Motor neuron (in vitro differentiated cells): ENCODE measurements at regions of chr22 and their contacts with region 1.

Region 1: DNA sequence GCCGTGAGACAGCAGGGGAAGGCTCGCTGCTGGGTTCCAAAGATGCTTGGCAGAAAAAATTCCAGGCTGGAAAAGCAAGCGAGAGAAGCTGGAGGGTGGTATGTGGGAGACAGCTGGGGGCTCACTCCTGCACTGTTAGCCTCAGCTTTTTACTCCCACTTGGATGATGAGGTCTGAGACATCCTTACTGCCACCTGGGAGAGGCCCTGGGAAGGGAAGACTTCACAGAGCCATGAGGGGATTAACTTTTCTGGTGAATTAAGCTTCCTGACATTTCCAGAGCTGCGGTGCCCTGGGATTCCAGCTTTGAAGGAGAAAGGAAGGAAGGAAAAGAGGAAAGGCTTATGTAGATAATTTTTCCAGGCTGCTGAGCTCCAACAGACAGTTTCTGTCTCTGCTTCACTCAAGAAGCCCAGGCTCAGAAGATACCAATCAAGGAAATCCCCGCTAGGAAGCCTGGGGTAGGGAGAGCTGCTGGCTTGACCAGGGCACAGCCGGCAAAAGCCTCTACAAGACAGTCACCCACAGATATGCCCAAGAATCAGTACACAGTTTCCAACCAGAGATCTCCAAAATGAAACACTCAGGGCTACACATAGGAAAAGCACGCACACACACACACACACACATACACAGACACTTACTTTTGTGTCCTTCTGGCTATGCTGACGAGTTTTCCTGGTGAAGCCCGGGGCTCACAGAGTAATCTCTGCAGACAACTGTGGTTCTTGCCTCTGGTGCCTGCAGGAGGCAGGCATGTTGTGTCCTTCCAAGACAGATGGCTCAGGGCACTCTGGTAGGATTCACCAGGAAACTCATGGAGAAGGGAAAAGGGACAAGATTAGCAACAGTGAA is 907 bp downstream of the MCHR1 start:
- ATAC-seq: peak in 3 of 8 experiments; percentile 8 to 27 (median 11)
- H3K4me3 ChIP-seq: peak overlapping the region; percentile 24 to 41 (median 34)
- H3K27ac ChIP-seq: no peak overlapping the region
- H3K4me1 ChIP-seq: peaks cover 24 to 28% of the 10 kb centered on the region in 2 donors

Region 2: GRCh38 chr22:40757071-40757470 is 76.9 kb after region 1 on chr22:
- in situ Hi-C with region 1: loop called in 1 of 9 experiments (anchors 10 kb)
- ATAC-seq: peak in 3 of 8 experiments; percentile 69 to 89 (median 88)
- H3K4me3 ChIP-seq: no peak overlapping the region
- H3K27ac ChIP-seq: no peak overlapping the region
- H3K4me1 ChIP-seq: no peaks in the 10 kb centered on the region

Region 3: GRCh38 chr22:41070665-41071331 is 390.6 kb after region 1 on chr22:
- in situ Hi-C with region 1: no loop called
- ATAC-seq: no peak
- H3K4me3 ChIP-seq: no peak overlapping the region
- H3K27ac ChIP-seq: no peak overlapping the region
- H3K4me1 ChIP-seq: no peaks in the 10 kb centered on the region